Cardiac septum (tissue), 1 donor: ENCODE measurements at regions of chr7 and their contacts with region 1.

Region 1: GRCh38 chr7:25656581-25657026 is 428.3 kb upstream of the NPVF start:
- DNase-seq: no peak

Region 2: DNA sequence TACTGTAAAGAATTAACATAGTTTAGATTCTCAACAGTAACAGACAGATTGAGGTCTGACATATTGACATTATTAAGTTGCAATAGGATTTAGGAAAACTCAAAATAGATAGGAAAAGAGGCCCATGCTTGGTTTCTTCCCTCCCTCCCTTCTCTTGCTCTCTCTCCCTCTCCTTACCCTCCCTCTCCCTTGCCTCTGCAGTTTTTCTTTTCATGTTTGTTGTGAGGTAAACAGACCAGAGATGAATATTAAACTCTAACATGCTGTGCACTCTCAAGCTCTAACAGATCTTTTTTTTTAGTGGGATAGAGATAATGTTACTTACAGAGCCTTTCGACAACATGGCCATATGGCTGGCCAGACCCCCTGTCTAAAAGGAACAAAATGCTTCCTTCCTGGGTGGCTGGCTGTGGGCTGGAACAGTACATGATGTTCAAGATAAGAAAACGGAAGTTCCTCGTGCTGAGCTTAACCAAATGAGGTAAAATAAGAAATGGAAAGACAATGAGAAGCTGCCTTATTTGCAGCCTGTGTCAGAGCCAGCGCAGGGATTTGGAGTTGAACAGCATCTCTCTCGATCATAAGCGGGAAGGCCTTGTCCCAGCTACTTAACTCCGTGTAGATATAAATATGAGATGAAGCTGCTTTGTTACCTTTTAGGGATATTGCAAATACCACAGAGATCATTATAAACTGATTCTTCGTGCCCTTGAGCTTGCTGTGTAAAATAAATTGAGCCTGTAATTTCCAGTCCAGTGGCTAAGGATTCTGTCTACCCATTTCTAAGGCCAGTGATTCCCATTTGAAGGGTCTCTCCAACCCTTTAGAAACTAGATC is 36.4 kb before region 1 on chr7:
- intact Hi-C with region 1: loop called (anchors 5 kb)
- DNase-seq: no peak